H1 (cell line): ENCODE measurements at regions of chr19 and their contacts with region 1.

Region 1: GRCh38 chr19:383922-384798 is 24.8 kb downstream of the C2CD4C start:
- DNase-seq: peak; percentile 41 to 85
- H3K4me3 ChIP-seq: no peak overlapping the region
- H3K27ac ChIP-seq: no peak overlapping the region
- H3K4me1 ChIP-seq: peaks cover 0 to 17% (median 7%) of the 10 kb centered on the region in 4 experiments; a peak in 4 of 7 replicates
- H3K27me3 ChIP-seq: peaks cover 0 to 3% (median 0%) of the 10 kb centered on the region in 4 experiments; a peak in 1 of 7 replicates
- CTCF ChIP-seq: peak; percentile 87 to 95 (median 90)
- EP300 ChIP-seq: no peak
- POLR2A ChIP-seq: no peak
- RAD21 ChIP-seq: peak; percentile 91 to 95

Region 2: DNA sequence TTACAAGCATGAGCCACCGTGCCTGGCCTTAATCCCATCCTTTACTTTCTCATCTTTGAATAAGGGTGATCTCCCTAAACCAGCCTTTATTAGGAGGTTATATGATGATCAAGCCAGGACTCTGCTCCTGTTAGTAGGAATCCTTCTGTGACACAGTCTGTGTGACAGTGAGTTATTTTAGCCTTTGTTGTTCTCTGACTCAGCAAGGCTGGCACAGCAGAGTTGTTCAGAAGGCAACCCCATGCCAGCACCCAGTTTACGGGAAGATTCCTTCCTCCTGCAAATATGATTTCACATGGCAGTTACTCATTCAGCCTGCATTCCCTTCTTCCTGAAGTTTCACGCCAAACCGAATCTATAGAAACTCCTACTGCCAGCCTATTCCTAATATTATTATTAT is 29.0 kb before region 1 on chr19:
- CTCF ChIA-PET with region 1: no interaction called
- POLR2A ChIA-PET with region 1: no interaction called
- DNase-seq: no peak
- H3K4me3 ChIP-seq: no peak overlapping the region
- H3K27ac ChIP-seq: no peak overlapping the region
- H3K4me1 ChIP-seq: no peaks in the 10 kb centered on the region
- H3K27me3 ChIP-seq: no peaks in the 10 kb centered on the region; a peak in 2 of 7 replicates
- CTCF ChIP-seq: no peak
- EP300 ChIP-seq: no peak
- POLR2A ChIP-seq: no peak
- RAD21 ChIP-seq: no peak

Region 3: GRCh38 chr19:367963-368629 is 16.1 kb before region 1 on chr19:
- CTCF ChIA-PET with region 1: interaction called, 25 read pairs
- POLR2A ChIA-PET with region 1: interaction called, 3 read pairs
- DNase-seq: no peak
- H3K4me3 ChIP-seq: no peak overlapping the region
- H3K27ac ChIP-seq: no peak overlapping the region
- H3K4me1 ChIP-seq: no peaks in the 10 kb centered on the region
- H3K27me3 ChIP-seq: no peaks in the 10 kb centered on the region; a peak in 1 of 7 replicates
- CTCF ChIP-seq: no peak
- EP300 ChIP-seq: no peak
- POLR2A ChIP-seq: no peak
- RAD21 ChIP-seq: no peak

Region 4: DNA sequence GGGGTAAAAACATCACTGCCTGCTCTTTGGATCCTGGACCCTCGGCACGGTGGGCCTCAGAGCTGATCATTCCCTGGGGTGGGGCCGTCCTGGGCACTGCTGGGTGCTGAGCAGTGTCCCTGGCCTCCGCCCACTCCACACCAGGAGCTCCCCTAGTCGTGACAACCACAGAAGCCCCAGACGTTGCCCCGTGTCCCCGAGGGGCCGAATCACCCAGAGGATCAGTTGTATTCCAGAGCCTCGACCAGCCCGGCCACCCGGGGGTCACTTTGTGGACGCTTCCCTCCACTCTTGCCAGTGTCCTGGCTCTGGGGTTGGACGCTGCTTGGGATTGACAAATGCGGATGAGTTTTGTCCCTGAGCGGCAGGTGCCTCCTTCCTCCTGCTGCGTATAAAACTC is 14.6 kb after region 1 on chr19:
- CTCF ChIA-PET with region 1: interaction called, 10 read pairs
- POLR2A ChIA-PET with region 1: interaction called, 3 read pairs
- DNase-seq: no peak
- H3K4me3 ChIP-seq: no peak overlapping the region
- H3K27ac ChIP-seq: no peak overlapping the region
- H3K4me1 ChIP-seq: no peaks in the 10 kb centered on the region
- H3K27me3 ChIP-seq: peaks cover 0 to 2% (median 0%) of the 10 kb centered on the region in 4 experiments; a peak in 2 of 7 replicates
- CTCF ChIP-seq: no peak
- EP300 ChIP-seq: no peak
- POLR2A ChIP-seq: no peak
- RAD21 ChIP-seq: no peak

Region 5: GRCh38 chr19:478236-478903 is 94.2 kb after region 1 on chr19:
- CTCF ChIA-PET with region 1: interaction called, 23 read pairs
- POLR2A ChIA-PET with region 1: interaction called, 6 read pairs
- DNase-seq: no peak
- H3K4me3 ChIP-seq: no peak overlapping the region
- H3K27ac ChIP-seq: no peak overlapping the region
- H3K4me1 ChIP-seq: peaks cover 0 to 4% (median 0%) of the 10 kb centered on the region in 4 experiments; a peak in 2 of 7 replicates
- H3K27me3 ChIP-seq: no peaks in the 10 kb centered on the region
- CTCF ChIP-seq: no peak
- EP300 ChIP-seq: no peak
- POLR2A ChIP-seq: no peak
- RAD21 ChIP-seq: no peak

Region 6: DNA sequence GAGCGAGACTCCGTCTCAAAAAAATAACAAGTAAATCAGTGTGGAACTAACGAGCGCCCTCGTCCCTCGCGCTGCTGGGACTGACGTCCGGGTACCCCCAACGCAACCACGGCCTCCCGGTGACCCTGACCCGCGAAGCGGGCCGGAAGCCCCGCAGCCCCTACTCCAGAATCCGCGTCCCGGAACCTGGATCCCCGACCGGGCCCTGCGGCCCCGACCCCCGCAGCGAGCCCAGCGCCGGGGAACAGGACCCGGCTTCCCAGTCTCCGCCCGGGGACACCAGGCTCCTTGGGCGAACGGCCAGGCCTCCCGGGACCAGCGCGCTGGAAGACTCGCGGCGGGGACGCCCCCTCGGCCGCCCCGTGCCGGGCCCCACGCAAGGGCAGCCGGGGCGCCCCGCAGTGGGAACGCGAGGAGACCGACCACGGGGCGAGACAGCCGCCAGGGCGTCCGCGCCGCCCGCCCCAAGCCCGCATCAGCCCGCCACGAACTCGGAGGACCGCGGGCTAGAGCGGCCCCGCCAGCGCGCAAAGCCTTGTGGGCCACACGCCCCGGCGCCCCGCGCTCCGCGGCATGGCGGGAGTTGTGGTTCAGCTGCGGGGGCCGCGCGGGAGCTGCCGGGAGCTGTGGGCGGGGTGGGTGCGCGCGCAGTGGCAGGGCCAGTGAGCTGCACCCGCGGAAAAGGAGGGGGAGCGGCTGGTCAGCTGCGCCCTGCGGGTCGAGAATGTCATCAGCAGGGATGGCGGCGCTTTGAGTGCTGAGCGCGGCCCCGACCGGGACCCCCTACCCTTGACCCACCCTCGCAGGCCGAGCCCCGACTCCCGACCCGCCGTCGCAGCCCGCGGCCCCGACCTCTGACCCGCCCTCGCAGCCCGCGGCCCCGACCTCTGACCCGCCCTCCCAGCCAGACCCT is 104.6 kb after region 1 on chr19:
- CTCF ChIA-PET with region 1: interaction called, 23 read pairs
- POLR2A ChIA-PET with region 1: interaction called, 6 read pairs
- DNase-seq: peak; percentile 60 to 97
- H3K4me3 ChIP-seq: peak overlapping the region; percentile 62 to 85 (median 76)
- H3K27ac ChIP-seq: peak overlapping the region; percentile 48; the same call in 1 of the 2 replicates
- H3K4me1 ChIP-seq: peaks cover 0 to 16% (median 10%) of the 10 kb centered on the region in 4 experiments; a peak in 6 of 7 replicates
- H3K27me3 ChIP-seq: no peaks in the 10 kb centered on the region; a peak in 2 of 7 replicates
- CTCF ChIP-seq: no peak
- EP300 ChIP-seq: no peak
- POLR2A ChIP-seq: peak in 1 of 2 experiments; percentile 58; a peak in 1 of 3 replicates
- RAD21 ChIP-seq: no peak

Region 7: DNA sequence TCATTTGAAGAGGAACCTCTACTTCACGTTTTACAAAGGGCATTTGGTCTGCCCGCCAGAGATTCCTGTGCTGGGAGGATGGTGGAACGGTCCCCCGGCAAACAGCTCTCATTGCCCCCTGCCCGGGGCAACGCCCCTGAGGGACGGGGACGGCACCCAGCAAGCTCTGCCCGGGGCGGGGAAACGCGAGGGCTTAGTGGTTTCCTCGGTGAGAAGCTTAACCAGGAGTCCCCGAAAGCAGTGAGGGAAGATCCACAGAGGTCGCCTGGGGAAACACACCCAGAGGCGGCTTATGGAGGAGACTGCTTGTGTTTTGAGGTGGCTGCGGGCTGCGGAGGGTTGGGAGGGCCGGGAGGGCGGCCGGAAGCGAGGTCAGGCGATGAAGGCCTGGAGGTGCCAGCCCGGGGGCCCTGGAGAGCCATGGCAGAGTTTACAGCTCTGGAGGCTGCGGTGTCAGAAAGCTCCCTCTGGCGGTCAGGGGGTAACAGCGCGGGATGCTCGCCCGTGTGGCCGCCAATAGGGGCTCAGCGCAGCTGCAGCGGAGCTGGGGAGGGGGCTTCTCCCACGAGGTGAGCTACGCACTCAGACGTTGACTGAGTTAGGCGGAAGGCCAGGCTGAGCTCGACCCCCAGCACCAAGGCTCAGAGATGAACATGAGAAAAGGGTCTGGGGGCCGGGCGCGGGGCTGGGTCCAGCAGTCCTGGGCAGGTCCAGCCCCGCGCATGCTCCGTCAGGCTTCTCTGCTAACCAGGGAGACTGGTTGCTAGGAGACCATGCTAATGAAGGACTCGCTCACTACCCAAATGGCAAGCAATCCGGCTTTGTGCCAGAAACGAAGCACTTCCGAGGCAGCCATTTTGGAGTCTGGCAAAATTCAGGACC is 122.5 kb after region 1 on chr19:
- CTCF ChIA-PET with region 1: interaction called, 20 read pairs
- POLR2A ChIA-PET with region 1: interaction called, 3 read pairs
- DNase-seq: peak; percentile 92 to 94
- H3K4me3 ChIP-seq: peak overlapping the region; percentile 79 to 86 (median 80)
- H3K27ac ChIP-seq: peak overlapping the region; percentile 97
- H3K4me1 ChIP-seq: peaks cover 0 to 12% (median 8%) of the 10 kb centered on the region in 4 experiments; a peak in 5 of 7 replicates
- H3K27me3 ChIP-seq: no peaks in the 10 kb centered on the region; a peak in 2 of 7 replicates
- CTCF ChIP-seq: peak; percentile 93 to 99 (median 97)
- EP300 ChIP-seq: peak in 1 of 2 experiments; percentile 49; a peak in 1 of 3 replicates
- POLR2A ChIP-seq: 0 out of 3 replicates have a peak, but pooled peaks of 1 of the 2 experiments have one; percentile 47
- RAD21 ChIP-seq: peak; percentile 57 to 66